ENCODE measurements at regions of chr7 and their contacts with region 1.

Region 1: DNA sequence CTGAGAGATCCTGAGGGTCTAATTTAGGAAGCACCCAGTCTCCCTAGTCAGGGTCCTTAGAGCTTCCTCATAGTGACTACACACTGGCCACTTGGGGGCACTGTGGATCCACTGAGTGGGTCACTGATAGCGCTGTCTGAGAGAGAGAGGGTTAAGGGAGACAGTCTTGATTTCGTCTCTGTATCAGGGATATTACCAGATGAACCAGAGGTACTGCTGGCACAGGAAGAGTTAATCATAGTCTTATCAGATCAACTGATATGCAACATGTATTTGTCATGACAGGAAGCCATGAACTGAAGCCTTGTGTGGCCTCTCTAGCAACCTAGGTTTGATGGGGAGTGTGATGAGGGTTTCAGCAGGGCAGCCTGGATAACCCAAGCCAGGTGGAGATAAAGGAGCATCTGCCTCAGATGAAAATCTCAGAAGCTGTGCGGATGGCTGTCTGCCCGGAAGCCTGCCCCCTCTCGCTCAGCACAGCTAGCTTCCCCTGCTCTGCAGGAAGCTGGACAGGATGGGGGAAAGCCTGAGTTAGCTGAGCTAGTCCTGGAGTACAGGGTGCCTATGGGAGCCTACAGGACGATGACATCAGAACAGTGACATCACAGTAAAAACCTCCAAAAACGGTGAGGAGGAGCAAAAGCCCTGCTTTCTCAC is 214.0 kb upstream of the PRSS1 start:
- H3K4me3 ChIP-seq: no peak overlapping the region
- H3K27ac ChIP-seq: no peak overlapping the region
- H3K4me1 ChIP-seq: no peaks in the 10 kb centered on the region
- CTCF ChIP-seq: peak; percentile 76

Region 2: DNA sequence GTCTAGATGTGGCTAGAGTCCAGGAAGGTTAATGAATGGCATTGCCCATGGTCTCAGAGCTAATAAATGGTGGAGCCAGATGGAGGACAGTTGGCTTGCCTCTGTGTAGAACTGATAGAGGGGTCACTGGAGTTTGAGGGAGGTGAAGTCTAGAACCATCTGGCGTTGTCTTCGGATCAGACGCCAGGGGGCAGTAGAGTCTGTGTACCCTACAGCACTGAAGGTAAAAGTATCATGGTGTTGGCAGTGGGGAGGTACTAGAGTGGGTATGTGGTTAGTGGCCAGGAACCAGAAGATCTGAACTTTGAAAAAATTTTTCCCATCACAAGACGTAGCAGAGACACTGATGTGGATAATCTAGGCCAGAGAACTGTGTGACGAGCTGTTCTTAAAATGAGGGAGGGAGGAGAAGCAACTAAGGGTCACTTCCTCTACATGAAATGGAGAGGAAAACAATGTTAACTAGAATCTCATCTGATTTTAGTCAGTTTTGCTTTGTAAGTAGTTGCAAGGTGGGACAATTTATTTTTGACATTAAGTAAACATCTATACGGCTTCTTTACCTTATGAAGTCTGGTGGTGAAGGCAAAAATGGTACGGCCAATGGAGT is 49.5 kb before region 1 on chr7:
- CTCF ChIA-PET with region 1: interaction called, 10 read pairs
- POLR2A ChIA-PET with region 1: no interaction called
- H3K4me3 ChIP-seq: no peak overlapping the region
- H3K27ac ChIP-seq: no peak overlapping the region
- H3K4me1 ChIP-seq: no peaks in the 10 kb centered on the region
- CTCF ChIP-seq: 0 out of 2 replicates have a peak, but pooled peaks have one; percentile 18

Region 3: DNA sequence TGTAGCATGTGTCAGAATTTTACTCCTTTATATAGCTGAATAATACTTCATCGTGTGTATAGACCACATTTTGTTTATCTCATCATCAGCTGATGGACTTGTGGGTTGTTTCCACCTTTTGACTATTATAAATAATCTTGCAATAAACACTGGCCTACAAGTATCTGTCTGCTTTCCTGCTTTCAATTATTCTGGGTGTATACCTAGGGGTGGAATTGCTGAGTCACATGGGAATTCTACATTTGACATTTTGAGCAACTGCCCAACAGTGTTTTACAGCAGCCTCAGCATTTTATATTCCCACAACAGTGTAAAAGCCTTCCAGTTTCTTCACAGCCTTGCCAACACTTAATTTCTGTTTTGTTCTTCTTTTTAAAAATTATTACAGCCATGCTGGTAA is 13.7 kb after region 1 on chr7:
- CTCF ChIA-PET with region 1: interaction called, 17 read pairs
- POLR2A ChIA-PET with region 1: no interaction called
- H3K4me3 ChIP-seq: no peak overlapping the region
- H3K27ac ChIP-seq: no peak overlapping the region
- H3K4me1 ChIP-seq: no peaks in the 10 kb centered on the region
- CTCF ChIP-seq: no peak

Region 4: DNA sequence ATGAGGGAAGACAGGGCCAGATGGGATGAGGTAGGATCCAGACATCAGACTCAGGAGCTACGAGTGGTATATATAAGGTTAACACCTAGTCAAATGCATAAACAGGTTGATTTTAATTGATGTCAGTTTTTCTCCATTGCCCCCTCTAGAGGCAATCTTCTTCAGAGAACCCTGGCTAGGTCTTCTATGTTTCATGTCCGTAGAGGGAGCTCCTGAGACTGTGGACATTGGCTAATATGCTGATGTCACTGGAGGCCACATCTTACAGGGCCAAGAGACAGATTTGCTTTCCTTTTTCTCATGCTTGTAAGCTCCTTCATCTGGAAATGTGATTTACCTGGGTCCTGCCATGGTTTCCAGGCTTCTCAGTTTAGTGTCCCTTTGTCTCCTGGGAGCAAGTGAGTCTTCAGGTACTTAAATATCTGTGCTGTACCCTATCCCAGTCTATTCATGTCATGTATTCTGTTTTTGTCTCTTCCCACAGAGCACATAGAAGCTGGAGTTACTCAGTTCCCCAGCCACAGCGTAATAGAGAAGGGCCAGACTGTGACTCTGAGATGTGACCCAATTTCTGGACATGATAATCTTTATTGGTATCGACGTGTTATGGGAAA is 52.4 kb after region 1 on chr7:
- CTCF ChIA-PET with region 1: interaction called, 30 read pairs
- POLR2A ChIA-PET with region 1: no interaction called
- H3K4me3 ChIP-seq: no peak overlapping the region
- H3K27ac ChIP-seq: no peak overlapping the region
- H3K4me1 ChIP-seq: no peaks in the 10 kb centered on the region
- CTCF ChIP-seq: peak; percentile 47; the same call in 1 of the 2 replicates

Region 5: DNA sequence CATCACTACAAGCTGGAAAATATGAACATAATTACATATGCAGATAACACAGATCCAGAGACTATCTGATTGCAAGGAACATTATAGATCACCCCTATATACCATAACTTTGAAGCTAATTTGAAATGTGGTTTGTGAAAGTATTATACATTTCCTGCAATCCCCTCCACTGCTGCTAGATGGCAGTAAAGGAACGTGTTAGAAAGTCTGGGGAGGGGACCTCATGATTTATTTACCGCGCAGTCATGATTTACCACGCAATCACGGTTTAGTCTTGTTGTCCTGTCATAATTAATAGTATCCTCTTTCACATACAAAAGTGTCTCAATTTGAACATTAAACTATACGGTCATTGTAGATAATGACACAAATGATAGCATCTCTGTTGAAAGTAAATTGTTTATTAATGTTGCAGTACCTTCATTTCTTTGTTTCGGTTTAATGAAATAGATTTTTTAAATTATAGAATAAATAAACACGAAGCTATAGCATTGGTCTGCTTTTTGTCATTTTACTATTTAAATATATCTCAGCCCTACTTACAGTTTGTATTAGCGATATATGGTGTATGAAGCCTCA is 68.7 kb after region 1 on chr7:
- CTCF ChIA-PET with region 1: interaction called, 31 read pairs
- POLR2A ChIA-PET with region 1: no interaction called
- H3K4me3 ChIP-seq: no peak overlapping the region
- H3K27ac ChIP-seq: no peak overlapping the region
- H3K4me1 ChIP-seq: no peaks in the 10 kb centered on the region
- CTCF ChIP-seq: peak; percentile 40; the same call in 1 of the 2 replicates

Region 6: GRCh38 chr7:142669074-142669654 is 133.9 kb after region 1 on chr7:
- CTCF ChIA-PET with region 1: interaction called, 10 read pairs
- POLR2A ChIA-PET with region 1: no interaction called
- H3K4me3 ChIP-seq: no peak overlapping the region
- H3K27ac ChIP-seq: no peak overlapping the region
- H3K4me1 ChIP-seq: no peaks in the 10 kb centered on the region
- CTCF ChIP-seq: no peak

Measured in HEK293 (cell line).